Activated T-helper 1 cell treated with anti-CD3 and anti-CD28 coated beads, Interleukin-12 subunit alpha, Interleukin-12 subunit beta, Interleukin-2, Interleukin-4 antibody, amounts not matched to agents 30 ng/mL and 10 ng/mL and 1 ng/mL, durations not matched to agents 14 hours and 24 hours and 36 hours (primary cell): ENCODE measurements at regions of chr7 and their contacts with region 1.

Region 1: GRCh38 chr7:8217200-8218068 is 44.5 kb downstream of the ICA1 start:
- DNase-seq: peak; percentile 11
- H3K4me3 Mint-ChIP-seq: no peak overlapping the region
- H3K27ac Mint-ChIP-seq: no peak overlapping the region
- H3K4me1 Mint-ChIP-seq: peaks cover 11% of the 10 kb centered on the region
- H3K27me3 Mint-ChIP-seq: peaks cover 2% of the 10 kb centered on the region

Region 2: GRCh38 chr7:7103343-7104313 is 1113.8 kb before region 1 on chr7:
- intact Hi-C with region 1: loop called (anchors 1 kb)
- DNase-seq: no peak
- H3K4me3 Mint-ChIP-seq: no peak overlapping the region
- H3K27ac Mint-ChIP-seq: no peak overlapping the region
- H3K4me1 Mint-ChIP-seq: peaks cover 16% of the 10 kb centered on the region
- H3K27me3 Mint-ChIP-seq: no peaks in the 10 kb centered on the region

Region 3: DNA sequence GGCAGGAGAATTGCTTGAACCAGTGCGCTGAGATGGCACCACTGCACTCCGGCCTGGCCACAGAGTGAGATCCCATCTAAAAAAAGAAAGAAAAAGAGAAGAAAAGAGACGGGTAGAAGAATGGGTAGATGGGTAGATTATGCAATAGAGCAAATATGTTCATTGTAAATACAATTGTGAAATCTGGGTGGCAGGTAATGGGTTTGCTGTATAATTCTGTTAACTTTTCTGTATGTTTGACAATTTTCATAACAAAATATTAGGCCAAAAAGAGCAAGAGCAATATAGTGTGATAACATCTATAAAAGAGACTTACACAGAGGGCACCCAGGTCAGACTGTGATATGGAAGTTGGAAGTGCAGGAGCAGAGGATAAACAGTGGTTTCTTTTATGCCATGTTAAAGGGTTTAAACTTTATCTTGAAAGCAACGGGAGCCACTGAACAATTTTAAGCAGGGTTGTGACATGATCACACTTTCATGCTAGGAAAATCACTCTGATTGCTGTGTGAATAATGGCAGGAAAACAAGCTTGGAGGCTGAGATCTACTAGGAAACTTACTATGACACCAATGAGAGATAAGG is 675.1 kb before region 1 on chr7:
- intact Hi-C with region 1: loop called (anchors 2 kb)
- DNase-seq: no peak
- H3K4me3 Mint-ChIP-seq: no peak overlapping the region
- H3K27ac Mint-ChIP-seq: no peak overlapping the region
- H3K4me1 Mint-ChIP-seq: no peaks in the 10 kb centered on the region
- H3K27me3 Mint-ChIP-seq: peaks cover 8% of the 10 kb centered on the region

Region 4: GRCh38 chr7:7681179-7681935 is 536.1 kb before region 1 on chr7:
- intact Hi-C with region 1: loop called (anchors 1 kb)
- DNase-seq: peak; percentile 12
- H3K4me3 Mint-ChIP-seq: no peak overlapping the region
- H3K27ac Mint-ChIP-seq: no peak overlapping the region
- H3K4me1 Mint-ChIP-seq: peaks cover 12% of the 10 kb centered on the region
- H3K27me3 Mint-ChIP-seq: no peaks in the 10 kb centered on the region

Region 5: DNA sequence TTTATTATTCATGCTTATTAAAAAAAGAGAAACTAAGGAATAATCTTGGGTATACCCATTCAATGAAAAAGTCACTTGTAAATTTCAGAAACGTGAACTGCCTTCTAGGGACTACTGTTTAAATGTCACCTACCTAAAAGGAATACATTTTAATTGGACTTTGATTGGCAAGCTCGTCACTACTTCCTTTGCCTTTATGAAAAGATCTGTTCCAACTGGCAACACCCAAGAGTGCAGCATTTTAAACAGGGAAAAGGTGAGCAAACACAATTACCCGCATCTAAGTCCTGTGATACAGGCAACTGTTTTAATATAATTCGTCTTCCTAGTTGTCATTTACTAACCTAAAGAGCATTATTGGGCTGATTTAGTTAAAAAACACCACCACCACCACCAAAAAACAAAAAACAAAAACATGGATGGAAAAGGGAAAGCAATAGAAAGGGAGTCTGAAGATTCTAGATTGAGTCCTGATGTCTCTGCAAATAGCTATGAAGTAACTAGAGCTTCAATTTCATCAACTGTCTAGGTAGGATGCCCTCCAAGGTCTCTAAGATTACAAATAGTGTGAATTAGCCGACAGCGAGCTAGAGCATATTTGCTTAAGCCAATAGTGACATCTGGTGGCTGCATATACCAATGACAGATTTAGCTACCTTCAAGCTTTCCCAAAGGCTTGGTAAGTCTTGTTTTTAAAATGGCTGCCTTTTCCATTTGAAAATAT is 78.4 kb after region 1 on chr7:
- intact Hi-C with region 1: loop called (anchors 1 kb)
- DNase-seq: peak; percentile 8
- H3K4me3 Mint-ChIP-seq: no peak overlapping the region
- H3K27ac Mint-ChIP-seq: no peak overlapping the region
- H3K4me1 Mint-ChIP-seq: peaks cover 4% of the 10 kb centered on the region
- H3K27me3 Mint-ChIP-seq: peaks cover 13% of the 10 kb centered on the region

Region 6: DNA sequence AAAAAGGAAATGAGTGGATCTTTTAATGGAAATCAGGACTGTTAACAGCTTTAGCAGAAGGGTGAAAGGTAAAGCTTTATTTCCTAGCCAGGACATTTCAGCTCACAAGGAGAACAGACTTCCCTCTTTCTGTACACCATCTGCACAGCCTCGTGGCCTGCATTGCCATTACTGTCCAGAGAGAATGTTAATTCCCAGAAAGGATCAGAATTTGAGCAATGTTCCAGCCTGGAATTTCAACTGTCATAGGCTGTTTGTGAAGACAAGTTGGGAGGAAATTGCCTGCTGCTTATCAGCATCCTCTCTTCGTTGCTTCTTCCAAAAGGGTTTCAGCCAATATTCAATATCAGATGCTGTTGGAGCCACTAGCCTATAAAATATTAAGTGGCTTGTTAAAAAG is 238.0 kb after region 1 on chr7:
- intact Hi-C with region 1: no loop called
- DNase-seq: no peak
- H3K4me3 Mint-ChIP-seq: no peak overlapping the region
- H3K27ac Mint-ChIP-seq: no peak overlapping the region
- H3K4me1 Mint-ChIP-seq: no peaks in the 10 kb centered on the region
- H3K27me3 Mint-ChIP-seq: peaks cover 4% of the 10 kb centered on the region